ENCODE measurements at regions of chr14 and their contacts with region 1.

Region 1: DNA sequence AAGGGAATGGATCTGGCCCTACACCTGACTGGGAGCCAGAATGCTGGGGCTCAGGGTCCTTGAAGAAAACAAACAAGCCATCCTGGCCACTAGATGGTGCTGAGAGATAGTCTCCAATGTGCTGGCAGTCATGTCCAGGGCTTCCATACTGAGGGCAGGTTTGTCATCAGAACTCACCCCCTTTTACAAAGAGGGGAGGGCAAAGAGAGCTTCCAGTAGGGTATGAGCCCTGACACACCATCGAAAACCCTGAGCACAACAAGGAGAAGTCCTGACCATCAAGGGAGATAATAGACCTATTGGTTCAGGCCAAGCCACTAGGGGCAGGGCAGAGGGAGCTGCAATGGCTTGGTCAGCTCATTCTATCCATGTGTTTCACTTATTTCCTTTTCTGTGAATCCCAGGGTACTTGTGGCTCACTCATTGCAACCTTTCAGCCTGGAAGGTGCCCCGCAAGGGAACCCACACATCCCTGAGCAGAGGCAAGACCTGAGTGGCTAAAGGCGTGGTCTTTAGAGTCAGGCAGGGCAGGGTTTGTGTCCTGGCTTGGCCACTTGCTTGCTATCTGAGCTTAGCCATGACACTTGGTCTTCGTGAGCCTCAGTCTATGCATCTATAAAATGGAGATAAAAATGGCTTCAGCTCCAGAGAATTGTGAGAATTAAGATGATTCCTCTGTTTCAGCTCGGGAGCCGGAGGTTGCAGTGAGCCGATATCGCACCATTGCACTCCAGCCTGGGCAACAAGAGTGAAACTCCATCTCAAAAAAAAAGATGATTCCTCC is 6.2 kb upstream of the PLEKHH1 start:
- DNase-seq: peak in 1 of 2 experiments; percentile 66
- H3K4me3 ChIP-seq: no peak overlapping the region
- H3K27ac ChIP-seq: no peak overlapping the region
- H3K4me1 ChIP-seq: no peaks in the 10 kb centered on the region; a peak in 1 of 7 replicates
- H3K27me3 ChIP-seq: no peaks in the 10 kb centered on the region
- CTCF ChIP-seq: peak; percentile 58 to 82 (median 80)
- EP300 ChIP-seq: no peak
- POLR2A ChIP-seq: no peak
- RAD21 ChIP-seq: peak; percentile 87 to 89

Region 2: GRCh38 chr14:67457782-67458181 is 69.1 kb before region 1 on chr14:
- CTCF ChIA-PET with region 1: interaction called, 20 read pairs
- POLR2A ChIA-PET with region 1: interaction called, 4 read pairs
- DNase-seq: peak; percentile 17 to 58
- H3K4me3 ChIP-seq: no peak overlapping the region
- H3K27ac ChIP-seq: no peak overlapping the region
- H3K4me1 ChIP-seq: peaks cover 0 to 4% (median 1%) of the 10 kb centered on the region in 4 experiments; a peak in 3 of 7 replicates
- H3K27me3 ChIP-seq: no peaks in the 10 kb centered on the region; a peak in 1 of 7 replicates
- CTCF ChIP-seq: no peak
- EP300 ChIP-seq: no peak
- POLR2A ChIP-seq: no peak
- RAD21 ChIP-seq: no peak

Region 3: GRCh38 chr14:67479974-67480373 is 46.9 kb before region 1 on chr14:
- CTCF ChIA-PET with region 1: interaction called, 23 read pairs
- POLR2A ChIA-PET with region 1: no interaction called
- DNase-seq: no peak
- H3K4me3 ChIP-seq: no peak overlapping the region
- H3K27ac ChIP-seq: no peak overlapping the region
- H3K4me1 ChIP-seq: no peaks in the 10 kb centered on the region
- H3K27me3 ChIP-seq: no peaks in the 10 kb centered on the region
- CTCF ChIP-seq: no peak
- EP300 ChIP-seq: no peak
- POLR2A ChIP-seq: no peak
- RAD21 ChIP-seq: no peak

Region 4: GRCh38 chr14:67502881-67503699 is 23.8 kb before region 1 on chr14:
- CTCF ChIA-PET with region 1: interaction called, 11 read pairs
- POLR2A ChIA-PET with region 1: no interaction called
- DNase-seq: no peak
- H3K4me3 ChIP-seq: no peak overlapping the region
- H3K27ac ChIP-seq: no peak overlapping the region
- H3K4me1 ChIP-seq: no peaks in the 10 kb centered on the region
- H3K27me3 ChIP-seq: no peaks in the 10 kb centered on the region
- CTCF ChIP-seq: no peak
- EP300 ChIP-seq: no peak
- POLR2A ChIP-seq: no peak
- RAD21 ChIP-seq: no peak

Region 5: GRCh38 chr14:67541448-67542387 is 14.8 kb after region 1 on chr14:
- CTCF ChIA-PET with region 1: interaction called, 48 read pairs
- POLR2A ChIA-PET with region 1: interaction called, 16 read pairs
- DNase-seq: peak in 1 of 2 experiments; percentile 69
- H3K4me3 ChIP-seq: peak overlapping the region; percentile 20 to 50 (median 30); a peak in 5 of 8 replicates
- H3K27ac ChIP-seq: peak overlapping the region; percentile 76
- H3K4me1 ChIP-seq: peaks cover 6 to 20% (median 13%) of the 10 kb centered on the region in 4 experiments
- H3K27me3 ChIP-seq: no peaks in the 10 kb centered on the region
- CTCF ChIP-seq: no peak
- EP300 ChIP-seq: no peak
- POLR2A ChIP-seq: peak; percentile 66 to 75
- RAD21 ChIP-seq: no peak

Region 6: GRCh38 chr14:67557126-67557525 is 30.3 kb after region 1 on chr14:
- CTCF ChIA-PET with region 1: interaction called, 924 read pairs
- POLR2A ChIA-PET with region 1: no interaction called
- DNase-seq: no peak
- H3K4me3 ChIP-seq: no peak overlapping the region
- H3K27ac ChIP-seq: no peak overlapping the region
- H3K4me1 ChIP-seq: peaks cover 0 to 3% (median under 1%) of the 10 kb centered on the region in 4 experiments; a peak in 2 of 7 replicates
- H3K27me3 ChIP-seq: no peaks in the 10 kb centered on the region
- CTCF ChIP-seq: no peak
- EP300 ChIP-seq: no peak
- POLR2A ChIP-seq: no peak
- RAD21 ChIP-seq: no peak

Measured in H1 (cell line).